A549 (cell line): ENCODE measurements at regions of chr3 and their contacts with region 1.

Region 1: GRCh38 chr3:112642912-112643506 is 2.1 kb upstream of the CCDC80 start:
- DNase-seq: peak; percentile 88 to 94
- ATAC-seq: peak; percentile 70 to 84
- H3K4me3 ChIP-seq: 0 out of 3 replicates have a peak overlapping the region, but pooled peaks have one; percentile 20
- H3K27ac ChIP-seq: peak overlapping the region; percentile 90 to 99
- H3K4me1 ChIP-seq: peaks cover 65% of the 10 kb centered on the region
- CTCF ChIP-seq: peak; percentile 96
- EP300 ChIP-seq: no peak
- POLR2A ChIP-seq: no peak
- RAD21 ChIP-seq: peak; percentile 100

Region 2: GRCh38 chr3:112539825-112540650 is 103.0 kb before region 1 on chr3:
- CTCF ChIA-PET with region 1: no interaction called
- POLR2A ChIA-PET with region 1: no interaction called
- DNase-seq: no peak
- ATAC-seq: no peak
- H3K4me3 ChIP-seq: no peak overlapping the region
- H3K27ac ChIP-seq: no peak overlapping the region
- H3K4me1 ChIP-seq: no peaks in the 10 kb centered on the region
- CTCF ChIP-seq: no peak
- EP300 ChIP-seq: no peak
- POLR2A ChIP-seq: no peak
- RAD21 ChIP-seq: no peak

Region 3: GRCh38 chr3:112561731-112562688 is 81.0 kb before region 1 on chr3 and contains the starts of genes ATG3 and SLC35A5:
- CTCF ChIA-PET with region 1: interaction called, 3 read pairs
- POLR2A ChIA-PET with region 1: interaction called, 10 read pairs
- DNase-seq: peak; percentile 96 to 98
- ATAC-seq: peak; percentile 90 to 93
- H3K4me3 ChIP-seq: peak within 1 kb of the TSS; percentile 75
- H3K27ac ChIP-seq: peak within 1 kb of the TSS; percentile 86 to 93
- H3K4me1 ChIP-seq: peaks cover 21% of the 10 kb centered on the region
- CTCF ChIP-seq: no peak
- EP300 ChIP-seq: no peak
- POLR2A ChIP-seq: peak; percentile 53
- RAD21 ChIP-seq: no peak
- polyA plus RNA-seq, gene ATG3: 47.0 and 74.5 TPM in 2 replicates
- polyA plus RNA-seq, gene SLC35A5: 53.4 and 64.7 TPM in 2 replicates

Region 4: DNA sequence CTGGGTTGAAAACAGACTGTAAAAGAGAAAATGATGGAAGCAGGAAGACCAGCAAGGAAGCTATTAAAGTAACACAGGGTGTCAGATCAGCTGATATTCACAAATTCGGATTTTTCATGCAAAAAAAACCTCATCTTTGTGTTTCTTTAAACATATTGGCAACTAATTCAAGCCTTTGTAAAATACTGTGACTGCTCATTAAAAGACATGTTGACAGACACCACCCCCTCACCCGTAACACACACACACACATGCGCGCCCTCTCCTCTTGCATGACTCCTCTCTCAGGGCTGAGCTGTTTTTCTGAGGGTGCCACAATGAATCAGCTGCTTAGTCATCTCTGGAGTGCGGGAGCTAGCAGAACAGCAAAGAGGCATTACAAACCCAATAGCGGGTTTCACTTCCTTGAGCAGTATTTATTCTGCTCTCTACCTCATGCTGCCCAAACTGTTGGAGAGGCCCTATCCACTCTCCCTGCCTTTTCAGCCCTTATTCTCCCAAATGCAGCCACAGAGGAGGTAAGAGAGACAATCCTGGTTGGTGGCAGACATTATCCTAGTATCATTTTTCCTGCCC is 33.7 kb after region 1 on chr3:
- CTCF ChIA-PET with region 1: interaction called, 16 read pairs
- POLR2A ChIA-PET with region 1: interaction called, 10 read pairs
- DNase-seq: peak; percentile 74 to 93
- ATAC-seq: peak; percentile 98
- H3K4me3 ChIP-seq: no peak overlapping the region
- H3K27ac ChIP-seq: peak overlapping the region; percentile 90
- H3K4me1 ChIP-seq: peaks cover 64% of the 10 kb centered on the region
- CTCF ChIP-seq: no peak
- EP300 ChIP-seq: peak; percentile 21 to 68; a peak in 1 of 5 replicates
- POLR2A ChIP-seq: no peak
- RAD21 ChIP-seq: peak; percentile 1 to 35; a peak in 2 of 5 replicates

Region 5: GRCh38 chr3:112699436-112699978 is 56.5 kb after region 1 on chr3:
- CTCF ChIA-PET with region 1: interaction called, 17 read pairs
- POLR2A ChIA-PET with region 1: no interaction called
- DNase-seq: peak in 1 of 2 experiments; percentile 79
- ATAC-seq: peak in 1 of 2 experiments; percentile 93; a peak in 3 of 6 replicates
- H3K4me3 ChIP-seq: no peak overlapping the region
- H3K27ac ChIP-seq: peak overlapping the region; percentile 30 to 80
- H3K4me1 ChIP-seq: peaks cover 4% of the 10 kb centered on the region; the same call in 2 of the 3 replicates
- CTCF ChIP-seq: no peak
- EP300 ChIP-seq: no peak
- POLR2A ChIP-seq: no peak
- RAD21 ChIP-seq: peak; percentile 58 to 70

Region 6: GRCh38 chr3:112773864-112774590 is 131.0 kb after region 1 on chr3:
- CTCF ChIA-PET with region 1: interaction called, 34 read pairs
- POLR2A ChIA-PET with region 1: interaction called, 14 read pairs
- DNase-seq: peak; percentile 48 to 91
- ATAC-seq: peak; percentile 81 to 84
- H3K4me3 ChIP-seq: no peak overlapping the region
- H3K27ac ChIP-seq: peak overlapping the region; percentile 87 to 96
- H3K4me1 ChIP-seq: peaks cover 71% of the 10 kb centered on the region
- CTCF ChIP-seq: no peak
- EP300 ChIP-seq: peak; percentile 58 to 66; a peak in 2 of 5 replicates
- POLR2A ChIP-seq: no peak
- RAD21 ChIP-seq: peak in 1 of 2 experiments; percentile 24; a peak in 1 of 5 replicates

Region 7: GRCh38 chr3:112814266-112814665 is 171.3 kb after region 1 on chr3:
- CTCF ChIA-PET with region 1: interaction called, 147 read pairs
- POLR2A ChIA-PET with region 1: interaction called, 15 read pairs
- DNase-seq: peak; percentile 33 to 82
- ATAC-seq: peak; percentile 82 to 93; a peak in 5 of 6 replicates
- H3K4me3 ChIP-seq: no peak overlapping the region
- H3K27ac ChIP-seq: peak overlapping the region; percentile 61 to 79
- H3K4me1 ChIP-seq: peaks cover 40% of the 10 kb centered on the region
- CTCF ChIP-seq: peak; percentile 83
- EP300 ChIP-seq: no peak
- POLR2A ChIP-seq: no peak
- RAD21 ChIP-seq: peak; percentile 90 to 96

Region 8: DNA sequence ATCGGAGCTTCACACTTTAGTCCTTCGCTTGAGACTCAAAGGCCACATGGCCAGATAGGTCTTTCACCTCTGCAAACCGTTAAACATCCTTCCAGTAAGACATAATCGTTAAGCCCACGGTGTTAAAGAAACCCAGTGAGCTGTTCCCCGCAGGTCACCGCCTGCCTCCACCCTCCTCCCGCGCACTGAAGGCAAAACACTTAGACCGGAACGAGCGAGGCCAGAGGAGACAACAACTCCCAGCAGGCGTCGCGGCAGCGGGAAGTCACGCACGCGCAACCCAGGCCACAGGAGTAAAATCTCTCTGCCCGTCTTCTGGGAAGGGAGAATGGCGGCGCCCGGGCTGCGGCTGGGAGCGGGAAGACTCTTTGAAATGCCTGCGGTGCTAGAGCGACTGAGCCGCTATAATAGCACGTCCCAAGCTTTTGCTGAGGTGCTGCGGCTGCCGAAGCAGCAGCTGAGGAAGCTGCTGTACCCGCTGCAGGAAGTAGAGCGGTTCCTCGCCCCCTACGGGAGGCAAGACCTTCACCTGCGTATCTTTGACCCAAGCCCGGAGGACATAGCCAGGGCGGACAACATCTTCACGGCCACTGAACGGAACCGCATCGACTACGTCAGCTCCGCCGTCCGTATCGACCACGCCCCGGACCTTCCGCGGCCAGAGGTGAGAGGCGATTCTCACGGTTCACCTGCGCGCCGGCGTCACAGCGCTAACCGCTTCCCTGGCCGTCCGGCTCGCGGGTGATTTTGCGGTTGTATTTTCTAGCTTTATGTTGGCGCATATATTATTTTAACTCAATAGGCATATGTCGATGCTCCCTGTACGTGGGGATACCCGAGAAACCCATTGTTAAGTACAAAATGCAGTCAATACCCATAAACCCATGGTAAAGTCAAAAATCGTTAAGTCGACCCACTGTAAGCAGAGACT is 347.9 kb after region 1 on chr3 and contains the start of gene GTPBP8:
- CTCF ChIA-PET with region 1: interaction called, 12 read pairs
- POLR2A ChIA-PET with region 1: interaction called, 23 read pairs
- DNase-seq: peak; percentile 84 to 95
- ATAC-seq: peak; percentile 98 to 99
- H3K4me3 ChIP-seq: peak within 1 kb of the TSS; percentile 88
- H3K27ac ChIP-seq: peak within 1 kb of the TSS; percentile 90 to 94
- H3K4me1 ChIP-seq: peaks cover 18% of the 10 kb centered on the region
- CTCF ChIP-seq: no peak
- EP300 ChIP-seq: no peak
- POLR2A ChIP-seq: peak; percentile 61
- RAD21 ChIP-seq: peak; percentile 2 to 27; a peak in 1 of 5 replicates
- polyA plus RNA-seq, gene GTPBP8: 25.9 and 26.6 TPM in 2 replicates